Sigmoid colon (tissue), 7 donors: ENCODE measurements at regions of chr7 and their contacts with region 1.

Region 1: GRCh38 chr7:99073839-99074446 is 70.0 kb downstream of the SMURF1 start:
- DNase-seq: no peak
- H3K4me3 ChIP-seq: no peak overlapping the region
- H3K27ac ChIP-seq: no peak overlapping the region
- H3K4me1 ChIP-seq: peaks cover 0 to 10% (median 7%) of the 10 kb centered on the region in 4 donors
- H3K27me3 ChIP-seq: no peaks in the 10 kb centered on the region
- CTCF ChIP-seq: no peak
- EP300 ChIP-seq: no peak
- POLR2A ChIP-seq: no peak

Region 2: DNA sequence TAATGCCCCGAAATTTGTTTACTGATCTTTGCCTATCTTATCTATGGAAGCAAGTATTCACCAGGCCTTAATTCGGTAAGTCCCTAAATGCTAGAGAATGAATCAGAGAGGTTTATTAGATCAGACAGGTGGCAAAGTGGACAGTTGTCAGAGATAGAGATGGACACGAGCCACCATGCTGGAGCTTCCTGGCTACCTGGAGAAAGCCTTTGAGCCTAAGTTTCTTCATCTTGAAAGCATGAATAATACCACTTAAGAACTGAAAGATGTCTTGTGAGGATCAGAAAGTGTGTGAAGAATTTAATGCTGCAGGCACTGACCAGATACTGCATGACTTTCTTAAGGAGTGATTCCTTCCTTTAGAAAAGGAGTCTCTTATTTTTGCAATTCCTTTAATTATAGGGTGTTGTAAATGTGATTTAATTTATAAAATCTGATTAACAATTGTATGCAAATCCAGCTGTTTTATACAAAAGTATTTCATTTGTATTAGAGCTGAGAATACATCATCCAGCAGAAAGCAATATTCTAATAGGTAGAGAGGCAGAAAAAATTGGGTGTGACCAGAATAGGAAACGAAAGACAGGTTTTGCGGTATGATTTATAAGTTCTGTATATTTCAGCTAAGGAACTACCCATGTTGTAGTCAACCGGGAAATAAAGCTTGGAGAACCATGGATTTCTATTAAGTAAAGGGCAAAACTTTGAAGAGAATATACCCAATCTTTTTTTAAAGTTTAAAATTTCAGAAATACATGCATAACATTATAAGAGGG is 12.8 kb before region 1 on chr7:
- intact Hi-C with region 1: loop called (anchors 1 kb)
- DNase-seq: no peak
- H3K4me3 ChIP-seq: no peak overlapping the region
- H3K27ac ChIP-seq: no peak overlapping the region
- H3K4me1 ChIP-seq: no peaks in the 10 kb centered on the region
- H3K27me3 ChIP-seq: no peaks in the 10 kb centered on the region
- CTCF ChIP-seq: no peak
- EP300 ChIP-seq: no peak
- POLR2A ChIP-seq: no peak